Activated CD4-positive, alpha-beta T cell treated with anti-CD3 and anti-CD28 coated beads for 36 hours (primary cell): ENCODE measurements at regions of chr14 and their contacts with region 1.

Region 1: DNA sequence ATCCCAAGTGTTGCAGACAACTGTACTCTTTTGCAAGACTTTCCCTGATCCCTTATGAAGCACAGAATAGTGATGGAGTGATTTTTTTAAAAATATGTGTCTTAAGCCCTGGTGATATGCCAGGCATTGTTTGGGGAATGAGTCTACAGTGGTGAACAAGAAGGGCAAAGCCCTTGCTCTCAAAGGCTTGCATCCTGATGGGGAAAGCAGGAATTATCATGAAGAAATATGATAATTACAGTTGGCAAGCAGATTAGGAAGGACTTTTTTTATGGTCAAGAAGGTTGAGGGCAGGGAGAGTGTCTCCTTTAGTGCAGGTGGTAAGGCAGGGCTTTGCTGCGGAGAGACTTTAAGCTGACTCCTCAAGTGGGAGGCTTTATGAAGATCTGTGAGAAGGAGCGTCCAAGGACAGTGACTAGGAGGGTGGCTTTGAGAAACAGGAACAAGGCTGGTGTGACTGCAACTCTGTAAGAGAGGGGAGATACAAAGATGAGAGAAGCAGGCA is 100.2 kb downstream of the SYNE2 start:
- DNase-seq: no peak
- ATAC-seq: no peak
- H3K4me3 Mint-ChIP-seq: no peak overlapping the region
- H3K27ac Mint-ChIP-seq: no peak overlapping the region
- H3K4me1 Mint-ChIP-seq: no peaks in the 10 kb centered on the region
- H3K27me3 Mint-ChIP-seq: no peaks in the 10 kb centered on the region

Region 2: GRCh38 chr14:64005822-64006221 is 52.8 kb after region 1 on chr14:
- CTCF ChIA-PET with region 1: no interaction called
- POLR2A ChIA-PET with region 1: interaction called, 13 read pairs
- intact Hi-C with region 1: no loop called
- DNase-seq: no peak
- ATAC-seq: no peak
- H3K4me3 Mint-ChIP-seq: no peak overlapping the region
- H3K27ac Mint-ChIP-seq: no peak overlapping the region
- H3K4me1 Mint-ChIP-seq: no peaks in the 10 kb centered on the region
- H3K27me3 Mint-ChIP-seq: no peaks in the 10 kb centered on the region